ENCODE measurements at regions of chr20 and their contacts with region 1.

Region 1: GRCh38 chr20:645318-646106 is 7.5 kb downstream of the SRXN1 start:
- DNase-seq: peak; percentile 70
- H3K4me3 Mint-ChIP-seq: no peak overlapping the region
- H3K27ac Mint-ChIP-seq: peak overlapping the region; percentile 36
- H3K4me1 Mint-ChIP-seq: peaks cover 18% of the 10 kb centered on the region
- H3K27me3 Mint-ChIP-seq: peaks cover 21% of the 10 kb centered on the region

Region 2: DNA sequence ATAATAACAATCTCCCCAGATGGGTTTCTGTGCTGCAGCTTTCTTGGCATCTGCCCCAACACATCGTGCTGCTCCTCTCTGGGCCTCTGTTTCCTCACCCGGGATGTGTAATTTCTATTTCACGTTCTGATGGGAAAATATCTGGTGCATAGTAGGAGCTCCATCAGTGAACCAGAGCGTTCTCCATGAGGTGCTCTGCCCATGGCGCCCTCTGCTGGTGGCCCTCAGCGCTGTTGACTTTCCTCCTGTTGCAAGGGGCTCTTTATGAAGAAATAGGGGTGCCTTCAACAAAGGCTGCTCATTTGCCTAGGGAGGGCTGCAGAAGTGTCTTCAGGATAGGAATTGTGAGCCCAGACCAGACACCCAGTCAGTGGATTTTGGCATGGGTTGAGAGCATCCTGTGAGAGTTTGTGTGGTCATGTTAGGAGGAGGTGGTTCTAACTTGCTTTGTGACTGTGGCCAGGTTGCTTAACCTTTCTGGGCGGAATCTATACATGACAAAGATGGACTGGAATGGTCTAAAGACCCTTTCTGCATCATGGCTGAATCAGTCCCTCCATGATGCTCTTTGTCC is 22.0 kb after region 1 on chr20:
- CTCF ChIA-PET with region 1: interaction called, 10 read pairs
- POLR2A ChIA-PET with region 1: no interaction called
- DNase-seq: peak; percentile 66
- H3K4me3 Mint-ChIP-seq: no peak overlapping the region
- H3K27ac Mint-ChIP-seq: no peak overlapping the region
- H3K4me1 Mint-ChIP-seq: peaks cover 8% of the 10 kb centered on the region
- H3K27me3 Mint-ChIP-seq: peaks cover 64% of the 10 kb centered on the region